ENCODE measurements at regions of chr10 and their contacts with region 1.

Region 1: GRCh38 chr10:57849691-57850357 is 417.9 kb downstream of the IPMK start:
- DNase-seq: peak; percentile 38
- H3K4me3 Mint-ChIP-seq: no peak overlapping the region
- H3K27ac Mint-ChIP-seq: no peak overlapping the region
- H3K4me1 Mint-ChIP-seq: peaks cover 5% of the 10 kb centered on the region
- H3K27me3 Mint-ChIP-seq: no peaks in the 10 kb centered on the region
- CTCF ChIP-seq: peak; percentile 58

Region 2: DNA sequence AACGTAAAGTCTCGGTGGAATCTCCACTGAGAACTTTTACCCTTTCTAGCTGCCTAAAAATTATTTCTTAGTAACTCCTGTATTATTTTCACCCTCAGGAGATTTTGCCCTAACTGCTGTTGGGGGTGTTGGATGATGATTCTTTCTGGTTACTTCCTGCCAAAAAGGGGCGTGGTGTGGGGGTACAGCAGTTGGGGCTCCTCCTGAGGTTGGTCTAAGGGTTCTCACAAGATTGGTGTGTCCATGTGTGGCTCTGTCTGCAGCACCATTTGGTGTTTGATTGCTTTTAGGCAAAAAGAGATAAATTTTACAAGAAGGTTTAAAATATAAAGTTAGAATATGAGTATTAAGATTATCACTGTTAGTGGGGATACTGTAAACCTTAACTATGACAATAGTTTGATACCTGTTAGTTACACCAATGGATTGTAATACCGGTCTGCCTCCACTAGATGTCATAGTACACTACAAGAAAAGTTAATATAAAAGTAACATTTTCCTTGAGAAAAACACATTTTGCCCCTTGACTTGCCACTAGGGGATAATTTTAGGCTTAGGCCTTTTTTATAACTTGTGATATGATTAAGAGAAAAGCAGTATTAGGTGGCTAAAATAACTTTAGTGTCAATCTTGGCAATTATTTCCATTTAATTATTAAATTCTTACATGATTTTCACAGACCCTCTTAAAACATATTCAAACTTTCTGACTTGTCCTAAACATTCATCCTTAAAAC is 510.8 kb before region 1 on chr10:
- CTCF ChIA-PET with region 1: interaction called, 7 read pairs
- POLR2A ChIA-PET with region 1: no interaction called
- intact Hi-C with region 1: loop called (anchors 1 kb)
- DNase-seq: peak; percentile 56
- H3K4me3 Mint-ChIP-seq: no peak overlapping the region
- H3K27ac Mint-ChIP-seq: no peak overlapping the region
- H3K4me1 Mint-ChIP-seq: no peaks in the 10 kb centered on the region
- H3K27me3 Mint-ChIP-seq: peaks cover 6% of the 10 kb centered on the region
- CTCF ChIP-seq: peak; percentile 55

Region 3: GRCh38 chr10:57716886-57717285 is 132.9 kb before region 1 on chr10:
- CTCF ChIA-PET with region 1: interaction called, 123 read pairs
- POLR2A ChIA-PET with region 1: interaction called, 7 read pairs
- intact Hi-C with region 1: loop called (anchors 1 kb)
- DNase-seq: peak; percentile 53
- H3K4me3 Mint-ChIP-seq: no peak overlapping the region
- H3K27ac Mint-ChIP-seq: no peak overlapping the region
- H3K4me1 Mint-ChIP-seq: no peaks in the 10 kb centered on the region
- H3K27me3 Mint-ChIP-seq: no peaks in the 10 kb centered on the region
- CTCF ChIP-seq: peak; percentile 42

Region 4: DNA sequence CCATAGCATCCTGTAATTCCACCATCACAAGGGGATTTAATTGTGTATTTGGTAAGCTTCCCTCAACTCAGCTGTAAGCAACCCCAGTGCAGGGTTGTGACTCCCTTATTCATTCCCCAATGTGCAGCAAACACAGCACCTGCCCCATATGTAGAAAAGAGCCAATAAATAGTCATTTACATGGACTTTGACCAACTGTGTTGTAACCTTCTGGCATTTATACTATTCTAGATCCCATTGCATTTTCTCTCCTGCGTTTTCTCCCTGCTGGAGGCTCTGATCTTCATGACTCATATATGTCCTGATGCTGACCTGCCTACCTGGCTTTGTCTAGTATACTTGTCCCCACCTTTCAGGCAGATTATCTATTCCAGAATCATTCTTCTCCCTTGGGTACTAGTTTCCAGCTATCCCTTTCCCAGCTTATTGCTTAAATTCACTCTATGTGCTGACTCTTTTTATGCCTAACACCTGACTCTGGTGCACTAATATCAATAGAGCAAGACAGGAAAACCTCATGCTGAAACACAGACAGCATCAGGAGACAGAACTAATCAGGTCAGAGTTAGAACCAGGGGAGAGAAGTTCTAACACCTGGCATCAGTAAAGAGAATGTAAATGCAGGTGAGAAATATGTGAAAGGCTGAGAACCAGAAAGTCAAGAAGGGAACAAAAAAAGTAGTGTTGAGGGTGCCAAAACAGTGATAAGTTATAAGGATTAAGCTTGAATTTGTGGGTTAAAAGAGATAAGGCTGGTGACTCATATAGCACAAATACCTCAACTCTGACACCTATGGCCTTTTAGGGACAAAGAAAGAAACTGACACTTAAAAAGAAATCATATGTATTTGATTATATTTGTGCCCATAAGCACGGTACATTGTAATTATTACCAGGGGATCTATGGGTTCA is 15.2 kb after region 1 on chr10:
- CTCF ChIA-PET with region 1: interaction called, 15 read pairs
- POLR2A ChIA-PET with region 1: no interaction called
- intact Hi-C with region 1: no loop called
- DNase-seq: peak; percentile 52
- H3K4me3 Mint-ChIP-seq: no peak overlapping the region
- H3K27ac Mint-ChIP-seq: no peak overlapping the region
- H3K4me1 Mint-ChIP-seq: peaks cover 8% of the 10 kb centered on the region
- H3K27me3 Mint-ChIP-seq: no peaks in the 10 kb centered on the region
- CTCF ChIP-seq: no peak

Region 5: DNA sequence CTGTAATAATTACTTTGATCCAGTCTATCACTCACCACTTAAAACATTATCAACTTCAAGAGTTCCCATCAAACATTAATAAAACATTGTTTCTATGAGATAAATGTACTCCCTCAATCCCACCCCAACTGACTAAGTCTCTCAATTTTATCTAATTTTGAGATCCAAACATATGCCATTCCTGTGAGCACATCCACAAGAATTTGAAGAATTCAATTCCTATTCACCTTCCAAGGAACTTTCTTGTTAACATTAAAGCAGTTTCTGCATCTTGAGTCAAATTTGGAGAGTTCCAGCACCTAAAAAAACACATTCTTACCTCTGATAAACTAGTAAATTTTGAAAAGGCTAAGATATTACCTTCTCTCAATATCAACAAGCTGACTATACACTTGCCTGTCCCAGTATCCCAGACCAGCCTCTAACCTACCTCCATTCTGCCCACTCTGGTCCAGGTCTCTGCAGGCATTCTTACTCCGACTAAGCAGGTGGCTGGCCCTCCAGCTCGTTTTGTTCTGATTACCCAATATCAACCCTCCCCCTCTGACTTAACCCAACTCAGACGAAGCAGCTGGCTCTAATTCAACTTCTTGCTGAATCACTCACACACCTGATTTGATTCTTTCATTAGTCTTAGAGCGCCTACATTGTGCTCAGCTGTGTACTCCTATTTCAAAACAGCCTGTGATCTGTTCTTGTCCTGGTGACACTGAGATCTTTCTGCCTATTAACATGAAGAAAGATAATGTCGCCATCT is 142.7 kb after region 1 on chr10:
- CTCF ChIA-PET with region 1: interaction called, 14 read pairs
- POLR2A ChIA-PET with region 1: no interaction called
- intact Hi-C with region 1: no loop called
- DNase-seq: peak; percentile 92
- H3K4me3 Mint-ChIP-seq: peak overlapping the region; percentile 55
- H3K27ac Mint-ChIP-seq: peak overlapping the region; percentile 52
- H3K4me1 Mint-ChIP-seq: peaks cover 12% of the 10 kb centered on the region
- H3K27me3 Mint-ChIP-seq: no peaks in the 10 kb centered on the region
- CTCF ChIP-seq: no peak

Region 6: GRCh38 chr10:58064714-58065528 is 215.1 kb after region 1 on chr10:
- CTCF ChIA-PET with region 1: interaction called, 27 read pairs
- POLR2A ChIA-PET with region 1: interaction called, 3 read pairs
- intact Hi-C with region 1: loop called (anchors 1 kb)
- DNase-seq: peak; percentile 62
- H3K4me3 Mint-ChIP-seq: no peak overlapping the region
- H3K27ac Mint-ChIP-seq: peak overlapping the region; percentile 30
- H3K4me1 Mint-ChIP-seq: peaks cover 6% of the 10 kb centered on the region
- H3K27me3 Mint-ChIP-seq: no peaks in the 10 kb centered on the region
- CTCF ChIP-seq: peak; percentile 90

Region 7: GRCh38 chr10:58094985-58095718 is 245.3 kb after region 1 on chr10:
- CTCF ChIA-PET with region 1: no interaction called
- POLR2A ChIA-PET with region 1: no interaction called
- intact Hi-C with region 1: no loop called
- DNase-seq: no peak
- H3K4me3 Mint-ChIP-seq: no peak overlapping the region
- H3K27ac Mint-ChIP-seq: no peak overlapping the region
- H3K4me1 Mint-ChIP-seq: no peaks in the 10 kb centered on the region
- H3K27me3 Mint-ChIP-seq: no peaks in the 10 kb centered on the region
- CTCF ChIP-seq: no peak